Upper lobe of right lung (tissue), 1 donor: ENCODE measurements at regions of chr12 and their contacts with region 1.

Region 1: GRCh38 chr12:5428332-5429221 is 3.3 kb upstream of the NTF3 start:
- DNase-seq: no peak
- ATAC-seq: no peak
- H3K4me3 ChIP-seq: no peak overlapping the region
- H3K27ac ChIP-seq: no peak overlapping the region
- H3K4me1 ChIP-seq: peaks cover 18% of the 10 kb centered on the region
- H3K27me3 ChIP-seq: peaks cover 55% of the 10 kb centered on the region
- CTCF ChIP-seq: peak; percentile 47

Region 2: DNA sequence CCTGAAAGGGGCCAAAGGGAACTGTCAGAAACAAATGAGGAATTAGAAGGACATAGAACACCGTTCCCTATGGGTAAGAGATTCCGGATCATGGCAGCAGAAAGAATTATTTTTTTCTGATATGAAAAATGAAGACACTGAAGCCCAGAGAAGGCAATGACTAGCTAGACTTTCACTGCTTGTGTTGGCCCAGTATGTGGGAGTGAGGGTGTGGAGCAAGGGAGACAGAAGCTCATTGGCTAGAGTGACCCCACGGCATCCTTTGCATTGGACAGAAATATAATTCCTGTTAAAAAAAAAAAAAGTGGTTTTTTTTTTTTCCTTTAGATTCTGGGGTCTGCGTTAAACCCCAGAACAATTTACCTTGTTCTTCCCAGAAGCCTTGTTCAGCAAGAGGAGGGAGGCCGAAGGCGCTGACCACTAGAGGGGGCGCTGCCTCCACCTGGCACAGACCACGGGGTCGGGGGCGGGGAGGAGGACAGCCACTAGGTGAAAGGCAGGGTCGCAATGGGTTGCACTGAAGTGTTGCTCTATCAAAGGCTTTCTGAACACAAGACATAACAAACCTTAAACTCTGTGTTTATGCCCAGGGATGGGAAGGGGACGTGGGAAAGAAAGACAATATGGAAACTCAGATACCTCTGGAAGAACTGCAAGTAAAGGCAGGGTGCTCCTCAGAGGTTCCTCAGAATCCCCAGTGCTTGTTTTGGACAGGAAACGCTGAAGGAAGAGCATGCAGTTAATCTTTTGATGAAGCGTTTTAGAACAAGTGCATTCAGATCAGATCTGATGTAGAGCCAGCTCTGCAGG is 228.1 kb before region 1 on chr12:
- intact Hi-C with region 1: loop called (anchors 10 kb)
- DNase-seq: peak; percentile 70
- ATAC-seq: peak; percentile 72
- H3K4me3 ChIP-seq: no peak overlapping the region
- H3K27ac ChIP-seq: no peak overlapping the region
- H3K4me1 ChIP-seq: no peaks in the 10 kb centered on the region
- H3K27me3 ChIP-seq: no peaks in the 10 kb centered on the region
- CTCF ChIP-seq: peak; percentile 62

Region 3: DNA sequence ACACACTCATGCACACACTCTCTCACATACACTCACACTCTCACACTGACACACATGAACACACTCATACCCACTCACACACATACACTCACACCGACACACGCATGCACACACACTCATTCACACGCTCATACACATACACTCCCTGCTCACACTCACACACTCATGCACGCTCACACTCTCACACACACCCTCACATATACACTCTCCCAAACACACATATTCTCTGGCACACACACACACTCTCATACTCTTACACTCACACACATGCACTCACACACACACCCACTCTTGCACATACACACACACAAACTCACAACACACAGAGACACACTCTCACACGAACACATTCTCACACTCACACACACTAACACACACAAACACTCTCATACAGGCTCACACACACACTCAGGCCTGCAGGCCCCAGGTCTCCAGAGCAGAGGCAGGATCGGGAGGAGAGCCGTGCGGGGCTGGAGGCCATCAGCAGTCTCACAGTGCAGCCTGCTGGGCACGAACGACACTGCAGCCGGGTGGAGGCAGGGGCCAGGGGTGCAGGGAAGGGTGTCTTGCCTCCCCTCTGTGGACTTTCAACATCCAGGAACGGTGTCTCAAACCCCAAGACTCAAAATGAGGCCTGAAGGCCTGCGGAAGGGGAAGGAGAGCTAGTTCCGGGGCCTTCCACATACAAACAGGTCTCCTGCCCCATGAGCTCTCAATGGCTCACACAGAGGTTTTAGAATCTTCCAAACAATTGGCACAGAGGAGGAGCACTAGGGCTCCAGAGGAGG is 367.8 kb after region 1 on chr12:
- intact Hi-C with region 1: loop called (anchors 10 kb)
- DNase-seq: peak; percentile 72
- ATAC-seq: peak; percentile 84
- H3K4me3 ChIP-seq: no peak overlapping the region
- H3K27ac ChIP-seq: no peak overlapping the region
- H3K4me1 ChIP-seq: no peaks in the 10 kb centered on the region
- H3K27me3 ChIP-seq: peaks cover 6% of the 10 kb centered on the region
- CTCF ChIP-seq: peak; percentile 65